ENCODE measurements at regions of chr17 and their contacts with region 1.

Region 1: GRCh38 chr17:700504-701094 is 14.0 kb downstream of the VPS53 start:
- DNase-seq: no peak
- ATAC-seq: peak; percentile 59 to 67
- H3K4me3 ChIP-seq: no peak overlapping the region
- H3K27ac ChIP-seq: no peak overlapping the region
- H3K4me1 ChIP-seq: peaks cover 30% of the 10 kb centered on the region
- H3K27me3 ChIP-seq: no peaks in the 10 kb centered on the region
- CTCF ChIP-seq: peak; percentile 75

Region 2: GRCh38 chr17:409848-410545 is 290.6 kb before region 1 on chr17:
- intact Hi-C with region 1: loop called (anchors 5 kb)
- DNase-seq: peak; percentile 100
- ATAC-seq: peak; percentile 94 to 95
- H3K4me3 ChIP-seq: peak overlapping the region; percentile 93
- H3K27ac ChIP-seq: peak overlapping the region; percentile 85
- H3K4me1 ChIP-seq: peaks cover 26% of the 10 kb centered on the region
- H3K27me3 ChIP-seq: no peaks in the 10 kb centered on the region
- CTCF ChIP-seq: no peak

Region 3: GRCh38 chr17:1060991-1061390 is 360.4 kb after region 1 on chr17:
- intact Hi-C with region 1: no loop called
- DNase-seq: peak; percentile 76
- ATAC-seq: peak; percentile 79 to 91
- H3K4me3 ChIP-seq: no peak overlapping the region
- H3K27ac ChIP-seq: no peak overlapping the region
- H3K4me1 ChIP-seq: peaks cover 2% of the 10 kb centered on the region
- H3K27me3 ChIP-seq: no peaks in the 10 kb centered on the region
- CTCF ChIP-seq: no peak

Measured in lower lobe of right lung (tissue), 2 donors.